ENCODE measurements at regions of chr17 and their contacts with region 1.

Region 1: GRCh38 chr17:78806451-78806850 is 24.4 kb upstream of the CYTH1 start:
- DNase-seq: peak in 21 of 35 experiments; percentile 36 to 86 (median 68)
- ATAC-seq: peak; percentile 40 to 76 (median 45)
- H3K4me3 ChIP-seq: no peak overlapping the region
- H3K4me3 Mint-ChIP-seq: peak overlapping the region in 2 of 3 donors; percentile 35 to 57
- H3K27ac ChIP-seq: peak overlapping the region; percentile 70
- H3K27ac Mint-ChIP-seq: peak overlapping the region; percentile 87 to 98
- H3K4me1 ChIP-seq: peaks cover 15 to 48% of the 10 kb centered on the region in 2 experiments
- H3K4me1 Mint-ChIP-seq: peaks cover 38 to 59% (median 50%) of the 10 kb centered on the region in 3 donors
- H3K27me3 ChIP-seq: no peaks in the 10 kb centered on the region
- H3K27me3 Mint-ChIP-seq: no peaks in the 10 kb centered on the region

Region 2: DNA sequence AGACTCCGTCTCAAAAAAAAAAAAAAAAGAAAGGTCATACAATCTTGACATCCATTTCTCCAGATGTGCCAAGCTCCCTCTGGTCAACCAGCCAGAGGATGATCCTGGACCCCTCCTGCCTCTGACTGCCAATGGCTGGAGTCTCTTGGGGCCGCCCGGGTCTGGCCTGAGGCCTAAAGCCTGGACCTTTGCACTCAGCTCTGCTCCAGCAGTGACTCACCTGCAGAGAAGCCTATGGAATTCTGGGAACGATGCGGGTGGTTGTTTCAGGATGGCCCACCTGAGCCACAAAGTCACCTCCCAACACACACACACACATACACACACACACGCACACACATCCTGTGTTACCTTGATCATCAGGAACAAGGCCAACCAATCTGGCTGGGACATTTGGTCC is 165.2 kb before region 1 on chr17:
- CTCF ChIA-PET with region 1: no interaction called
- POLR2A ChIA-PET with region 1: no interaction called
- DNase-seq: no peak
- ATAC-seq: no peak
- H3K4me3 ChIP-seq: no peak overlapping the region
- H3K4me3 Mint-ChIP-seq: no peak overlapping the region
- H3K27ac ChIP-seq: no peak overlapping the region
- H3K27ac Mint-ChIP-seq: no peak overlapping the region
- H3K4me1 ChIP-seq: peaks cover 0 to 9% of the 10 kb centered on the region in 2 experiments
- H3K4me1 Mint-ChIP-seq: peaks cover 13 to 24% (median 13%) of the 10 kb centered on the region in 3 donors
- H3K27me3 ChIP-seq: peaks cover 0 to 16% of the 10 kb centered on the region in 2 experiments
- H3K27me3 Mint-ChIP-seq: peaks cover 0 to 2% of the 10 kb centered on the region in 2 donors

Region 3: GRCh38 chr17:78716814-78717393 is 89.5 kb before region 1 on chr17:
- CTCF ChIA-PET with region 1: no interaction called
- POLR2A ChIA-PET with region 1: no interaction called
- DNase-seq: peak in 25 of 35 experiments; percentile 18 to 53 (median 34)
- ATAC-seq: peak; percentile 33 to 57 (median 54)
- H3K4me3 ChIP-seq: peak overlapping the region in 1 of 2 donors; percentile 45
- H3K4me3 Mint-ChIP-seq: peak overlapping the region; percentile 29 to 83 (median 50)
- H3K27ac ChIP-seq: no peak overlapping the region
- H3K27ac Mint-ChIP-seq: peak overlapping the region; percentile 24 to 89
- H3K4me1 ChIP-seq: peaks cover 56 to 84% of the 10 kb centered on the region in 2 experiments
- H3K4me1 Mint-ChIP-seq: peaks cover 92 to 94% (median 94%) of the 10 kb centered on the region in 3 donors
- H3K27me3 ChIP-seq: no peaks in the 10 kb centered on the region
- H3K27me3 Mint-ChIP-seq: no peaks in the 10 kb centered on the region

Region 4: DNA sequence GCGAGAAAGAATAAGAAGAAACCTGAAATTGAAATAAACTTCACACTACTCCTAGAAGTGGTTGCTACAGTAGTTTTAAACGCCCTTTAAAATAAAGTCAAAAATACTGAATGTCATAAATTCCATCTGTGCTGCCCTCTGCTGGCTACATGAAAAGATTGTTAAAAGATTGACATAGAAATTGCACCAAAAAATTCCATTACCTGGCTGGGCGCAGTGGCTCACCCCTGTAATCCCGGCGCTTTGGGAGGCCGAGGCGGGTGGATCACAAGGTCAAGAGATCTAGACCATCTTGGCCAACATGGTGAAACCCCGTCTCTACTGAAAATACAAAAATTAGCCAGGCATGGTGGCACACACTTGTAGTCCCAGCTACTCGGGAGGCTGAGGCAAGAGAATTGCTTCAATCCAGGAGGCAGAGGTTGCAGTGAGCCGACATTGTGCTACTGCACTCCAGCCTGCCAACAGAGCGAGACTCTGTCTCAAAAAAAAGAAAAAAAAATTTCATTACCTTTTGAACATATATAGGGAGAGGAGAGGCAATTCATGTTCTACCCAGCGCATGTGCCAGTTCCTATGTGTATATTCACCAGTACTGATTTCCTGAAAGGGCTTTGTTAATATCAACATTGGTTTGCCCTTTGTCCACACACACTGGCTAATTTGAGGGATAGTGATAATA is 60.9 kb before region 1 on chr17:
- CTCF ChIA-PET with region 1: no interaction called
- POLR2A ChIA-PET with region 1: no interaction called
- DNase-seq: peak in 23 of 35 experiments; percentile 26 to 84 (median 48)
- ATAC-seq: no peak
- H3K4me3 ChIP-seq: peak overlapping the region in 1 of 2 donors; percentile 17
- H3K4me3 Mint-ChIP-seq: peak overlapping the region; percentile 53 to 83 (median 60)
- H3K27ac ChIP-seq: peak overlapping the region; percentile 93
- H3K27ac Mint-ChIP-seq: peak overlapping the region; percentile 90 to 94
- H3K4me1 ChIP-seq: peaks cover 83 to 89% of the 10 kb centered on the region in 2 experiments
- H3K4me1 Mint-ChIP-seq: peaks cover 95 to 97% (median 96%) of the 10 kb centered on the region in 3 donors
- H3K27me3 ChIP-seq: no peaks in the 10 kb centered on the region
- H3K27me3 Mint-ChIP-seq: no peaks in the 10 kb centered on the region

Region 5: DNA sequence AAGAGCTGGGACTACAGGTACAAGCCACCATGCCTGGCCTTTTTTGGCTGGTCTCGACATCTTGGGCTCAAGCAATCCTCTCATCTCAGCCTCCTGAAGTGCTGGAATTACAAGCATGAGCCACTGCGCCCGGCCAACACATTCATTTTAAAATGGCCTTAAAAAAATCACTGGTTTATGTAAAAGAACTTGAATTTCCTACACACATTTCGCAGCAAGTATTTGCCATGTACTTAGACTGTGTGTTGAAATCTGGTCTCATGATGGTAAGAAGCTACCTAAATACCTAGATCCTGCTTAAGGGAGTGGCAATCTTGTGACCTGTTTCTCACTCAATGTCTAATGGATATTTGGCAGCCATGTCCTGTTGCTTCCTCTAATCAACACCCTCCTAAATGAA is 15.9 kb before region 1 on chr17:
- CTCF ChIA-PET with region 1: interaction called in 1 of 2 experiments, 6 read pairs
- POLR2A ChIA-PET with region 1: interaction called, 7 to 18 read pairs
- DNase-seq: no peak
- ATAC-seq: no peak
- H3K4me3 ChIP-seq: no peak overlapping the region
- H3K4me3 Mint-ChIP-seq: peak overlapping the region in 1 of 3 donors; percentile 63
- H3K27ac ChIP-seq: peak overlapping the region; percentile 73
- H3K27ac Mint-ChIP-seq: peak overlapping the region; percentile 89 to 93
- H3K4me1 ChIP-seq: peaks cover 9 to 91% of the 10 kb centered on the region in 2 experiments
- H3K4me1 Mint-ChIP-seq: peaks cover 69 to 83% (median 81%) of the 10 kb centered on the region in 3 donors
- H3K27me3 ChIP-seq: no peaks in the 10 kb centered on the region
- H3K27me3 Mint-ChIP-seq: no peaks in the 10 kb centered on the region

Region 6: GRCh38 chr17:78819806-78820792 is 13.6 kb after region 1 on chr17:
- CTCF ChIA-PET with region 1: interaction called in 1 of 2 experiments, 13 read pairs
- POLR2A ChIA-PET with region 1: interaction called in 1 of 2 experiments, 4 read pairs
- DNase-seq: peak in 1 of 35 experiments; percentile 27
- ATAC-seq: no peak
- H3K4me3 ChIP-seq: no peak overlapping the region
- H3K4me3 Mint-ChIP-seq: peak overlapping the region in 2 of 3 donors; percentile 56 to 70
- H3K27ac ChIP-seq: peak overlapping the region; percentile 90
- H3K27ac Mint-ChIP-seq: peak overlapping the region; percentile 91 to 92
- H3K4me1 ChIP-seq: peaks cover 42 to 53% of the 10 kb centered on the region in 2 experiments
- H3K4me1 Mint-ChIP-seq: peaks cover 55 to 80% (median 67%) of the 10 kb centered on the region in 3 donors
- H3K27me3 ChIP-seq: no peaks in the 10 kb centered on the region
- H3K27me3 Mint-ChIP-seq: no peaks in the 10 kb centered on the region

Measured in T-cell (primary cell).